Head of caudate nucleus (tissue), 42 donors: ENCODE measurements at regions of chrX and their contacts with region 1.

Region 1: GRCh38 chrX:110407910-110408545 is 49.4 kb downstream of the RTL9 start:
- DNase-seq: peak in 28 of 42 donors; percentile 13 to 86 (median 64)

Region 2: GRCh38 chrX:110163488-110163887 is 244.5 kb before region 1 on chrX:
- intact Hi-C with region 1: loop called (anchors 5 kb)
- DNase-seq: no peak